AG04449 (cell line): ENCODE measurements at regions of chr17 and their contacts with region 1.

Region 1: GRCh38 chr17:72556944-72557826 is 436.4 kb downstream of the SOX9 start:
- DNase-seq: no peak
- H3K4me3 ChIP-seq: no peak overlapping the region
- CTCF ChIP-seq: peak; percentile 84

Region 2: GRCh38 chr17:72439893-72440502 is 117.2 kb before region 1 on chr17:
- CTCF ChIA-PET with region 1: no interaction called
- POLR2A ChIA-PET with region 1: no interaction called
- DNase-seq: no peak
- H3K4me3 ChIP-seq: no peak overlapping the region
- CTCF ChIP-seq: no peak

Region 3: GRCh38 chr17:72479113-72479512 is 78.1 kb before region 1 on chr17:
- CTCF ChIA-PET with region 1: no interaction called
- POLR2A ChIA-PET with region 1: no interaction called
- DNase-seq: no peak
- H3K4me3 ChIP-seq: no peak overlapping the region
- CTCF ChIP-seq: no peak

Region 4: GRCh38 chr17:72569148-72569946 is 12.2 kb after region 1 on chr17:
- CTCF ChIA-PET with region 1: interaction called, 79 read pairs
- POLR2A ChIA-PET with region 1: no interaction called
- DNase-seq: no peak
- H3K4me3 ChIP-seq: no peak overlapping the region
- CTCF ChIP-seq: no peak

Region 5: DNA sequence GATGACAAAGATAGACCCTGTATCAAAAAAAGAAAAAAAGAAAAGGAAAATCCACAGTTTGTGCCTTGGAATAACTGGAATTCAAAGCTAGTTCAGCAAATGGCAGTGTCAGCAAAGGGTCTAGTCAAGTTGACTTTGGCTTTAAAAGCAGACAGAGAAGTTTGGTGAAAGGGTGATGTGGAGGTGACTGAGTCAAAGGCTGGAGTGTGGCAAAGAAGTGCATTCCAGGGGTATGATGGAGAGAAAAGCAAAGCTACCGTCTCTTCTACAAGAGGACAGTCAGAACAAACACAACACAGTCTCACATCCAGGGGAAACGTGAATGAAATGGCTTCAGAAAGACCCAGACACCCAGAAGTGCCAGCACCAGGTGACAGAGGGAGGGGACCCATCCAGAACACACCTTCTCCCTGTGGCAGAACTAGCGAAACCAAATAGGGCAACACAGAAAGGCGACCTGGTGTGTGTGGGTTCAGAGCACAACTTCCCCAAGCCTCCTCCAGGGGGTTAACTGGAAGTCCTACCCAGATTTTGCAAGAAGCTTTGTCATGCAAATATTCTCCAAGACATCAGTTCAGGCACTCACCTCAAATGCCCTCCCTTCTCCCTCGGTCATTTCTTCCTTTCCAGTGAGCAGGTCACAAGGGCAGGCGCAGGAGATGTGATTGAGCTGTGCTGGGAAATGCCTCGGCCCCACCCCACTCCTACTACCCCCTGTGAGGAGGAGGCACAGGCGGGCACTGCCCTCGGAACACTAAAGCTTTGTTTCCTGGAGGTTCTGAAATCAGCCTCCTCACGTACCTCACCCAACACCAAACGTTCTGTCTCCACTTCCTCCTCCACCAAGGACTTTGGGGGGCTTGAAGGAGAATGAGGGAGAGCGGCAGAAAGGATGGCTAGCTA is 45.6 kb after region 1 on chr17:
- CTCF ChIA-PET with region 1: interaction called, 10 read pairs
- POLR2A ChIA-PET with region 1: no interaction called
- DNase-seq: peak; percentile 65
- H3K4me3 ChIP-seq: no peak overlapping the region
- CTCF ChIP-seq: peak; percentile 25

Region 6: DNA sequence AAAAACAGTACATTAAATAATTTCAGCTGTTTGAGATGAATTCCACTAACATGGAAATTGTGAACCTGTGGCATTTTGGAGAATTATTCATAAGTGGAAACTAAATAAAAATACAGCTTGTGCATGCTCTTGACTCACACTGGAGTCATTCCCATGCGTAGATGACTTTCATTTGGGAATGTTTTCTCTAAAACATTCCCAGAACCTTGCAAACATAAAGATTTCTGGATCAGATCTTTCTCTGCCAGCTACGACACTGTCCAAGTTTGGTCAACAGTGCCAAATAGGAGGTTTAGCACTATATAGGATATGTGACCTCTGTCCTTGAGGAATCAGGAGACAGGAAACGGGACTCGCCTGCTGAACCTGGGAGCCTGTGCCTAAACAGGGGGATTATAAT is 134.4 kb after region 1 on chr17:
- CTCF ChIA-PET with region 1: interaction called, 17 read pairs
- POLR2A ChIA-PET with region 1: no interaction called
- DNase-seq: peak; percentile 91
- H3K4me3 ChIP-seq: no peak overlapping the region
- CTCF ChIP-seq: no peak

Region 7: DNA sequence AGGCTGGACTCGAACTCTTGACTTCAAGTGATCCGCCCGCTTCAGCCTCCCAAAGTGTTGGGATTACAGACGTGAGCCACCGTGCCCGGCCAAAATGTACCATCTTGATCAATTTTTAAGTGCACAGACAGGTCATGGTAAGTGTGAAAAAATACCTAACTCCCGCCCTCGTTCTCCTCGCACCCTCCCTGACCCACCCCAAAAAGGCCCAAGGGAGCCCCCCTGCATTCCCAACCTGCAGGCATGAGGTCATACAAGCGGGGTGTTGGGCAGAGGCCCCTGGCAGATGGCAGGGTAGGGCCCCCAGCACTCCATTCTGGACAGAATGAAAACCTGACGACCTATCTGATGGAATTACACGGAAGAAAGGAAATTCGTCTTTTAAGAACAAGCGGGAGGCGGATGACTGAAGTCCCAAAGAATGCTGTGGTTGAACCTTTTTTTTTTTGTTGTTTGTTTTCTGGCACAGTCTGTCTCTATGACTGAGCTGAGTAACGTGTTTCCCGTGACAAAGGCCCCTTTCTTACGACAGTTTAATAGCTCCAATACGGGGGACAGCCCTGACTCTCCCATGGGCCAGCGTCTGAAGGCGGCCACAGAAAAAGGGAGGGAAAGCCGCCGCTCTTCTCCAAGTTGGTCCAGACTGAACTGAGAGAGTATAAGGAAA is 158.9 kb after region 1 on chr17:
- CTCF ChIA-PET with region 1: interaction called, 174 read pairs
- POLR2A ChIA-PET with region 1: no interaction called
- DNase-seq: peak; percentile 87
- H3K4me3 ChIP-seq: peak overlapping the region; percentile 6; the same call in 1 of the 2 replicates
- CTCF ChIP-seq: no peak

Region 8: DNA sequence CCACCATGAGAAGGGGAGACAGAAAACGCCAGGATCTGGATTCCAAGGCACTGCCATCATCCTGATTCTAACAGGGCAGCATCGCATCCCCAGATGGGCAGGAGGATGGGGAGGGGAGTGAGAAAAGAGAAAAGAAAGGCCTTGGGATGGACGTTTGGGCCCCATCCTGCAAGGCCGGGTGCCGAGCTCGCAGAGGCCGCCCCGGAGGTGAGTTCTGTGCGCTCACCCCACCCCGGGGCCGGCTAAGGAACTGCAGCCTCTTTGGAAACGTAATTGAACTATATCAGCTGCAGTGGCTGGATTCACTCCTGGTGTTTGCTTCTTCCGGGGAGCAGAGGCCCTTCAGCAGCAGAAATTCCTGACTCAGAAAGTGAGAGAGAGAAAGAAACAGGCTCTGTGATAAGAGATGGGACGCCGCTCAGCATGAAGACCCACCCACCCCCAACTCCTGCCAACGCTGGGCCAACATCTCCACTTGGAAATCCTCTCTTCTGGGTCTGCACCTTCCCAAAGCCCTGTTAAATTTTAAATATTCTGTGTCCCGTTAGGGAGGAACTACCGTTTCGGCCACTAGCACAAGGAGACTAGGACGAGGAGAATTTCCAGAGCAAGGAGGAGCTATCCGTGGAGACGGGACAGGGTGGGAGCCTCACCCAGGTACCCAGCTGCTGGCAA is 599.1 kb after region 1 on chr17:
- CTCF ChIA-PET with region 1: interaction called, 13 read pairs
- POLR2A ChIA-PET with region 1: no interaction called
- DNase-seq: no peak
- H3K4me3 ChIP-seq: no peak overlapping the region
- CTCF ChIP-seq: peak; percentile 80

Region 9: GRCh38 chr17:73371285-73371684 is 814.1 kb after region 1 on chr17:
- CTCF ChIA-PET with region 1: interaction called, 11 read pairs
- POLR2A ChIA-PET with region 1: no interaction called
- DNase-seq: peak; percentile 78
- H3K4me3 ChIP-seq: no peak overlapping the region
- CTCF ChIP-seq: no peak